PC-3 (cell line): ENCODE measurements at regions of chr7 and their contacts with region 1.

Region 1: GRCh38 chr7:154503962-154504550 is 451.9 kb downstream of the DPP6 start:
- DNase-seq: peak; percentile 53
- ATAC-seq: no peak
- H3K4me3 ChIP-seq: no peak overlapping the region
- H3K27ac ChIP-seq: no peak overlapping the region
- H3K4me1 ChIP-seq: no peaks in the 10 kb centered on the region
- H3K27me3 ChIP-seq: no peaks in the 10 kb centered on the region
- CTCF ChIP-seq: peak; percentile 61

Region 2: DNA sequence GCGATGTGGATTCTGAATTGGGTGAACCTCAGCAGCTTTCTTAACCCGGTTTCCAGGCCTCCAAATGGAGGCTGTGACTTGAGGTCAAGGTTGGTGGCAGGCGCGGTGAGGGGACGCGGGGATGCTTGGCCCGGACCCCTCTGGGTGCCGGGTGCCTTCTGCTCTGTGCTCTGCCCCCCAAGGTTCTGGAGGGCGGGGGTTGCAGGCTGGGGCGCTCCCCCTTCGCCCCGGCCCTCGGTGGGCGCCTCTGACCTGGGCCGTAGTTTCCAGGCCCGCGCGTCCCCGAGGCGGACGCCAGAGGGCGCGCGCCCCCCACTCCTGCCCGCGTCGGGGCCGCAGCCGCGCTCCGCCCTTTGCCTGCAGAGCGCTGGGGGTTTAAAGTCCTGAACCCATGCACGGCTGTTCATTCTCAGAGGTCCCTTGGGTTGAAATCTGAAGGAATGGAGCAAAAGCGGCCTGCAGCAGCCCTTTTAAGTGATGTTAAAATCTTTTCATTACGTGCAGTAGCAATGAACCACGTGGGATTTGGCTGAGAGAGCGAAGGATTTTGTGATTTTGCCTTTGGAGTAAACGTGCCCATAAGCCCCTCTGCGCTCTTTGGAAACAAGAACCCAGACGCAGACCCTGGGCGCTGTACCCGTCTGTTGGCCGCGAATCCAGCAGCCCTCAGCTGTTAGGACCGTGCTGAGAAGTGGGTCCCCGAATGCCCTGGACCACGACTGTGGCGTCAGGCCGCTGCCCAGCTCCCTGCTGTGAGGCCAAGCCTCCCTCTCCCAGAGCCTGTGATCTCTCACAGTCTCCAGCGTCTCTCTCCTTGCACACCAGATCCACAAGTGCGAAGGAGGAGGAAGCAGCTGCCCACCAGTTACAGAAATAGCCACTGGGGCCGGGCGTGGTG is 1609.5 kb before region 1 on chr7:
- CTCF ChIA-PET with region 1: no interaction called
- POLR2A ChIA-PET with region 1: no interaction called
- intact Hi-C with region 1: loop called (anchors 5 kb)
- DNase-seq: peak; percentile 29
- ATAC-seq: peak; percentile 81
- H3K4me3 ChIP-seq: no peak overlapping the region
- H3K27ac ChIP-seq: no peak overlapping the region
- H3K4me1 ChIP-seq: 0 out of 2 replicates have a peak, but pooled peaks cover 3% of the 10 kb centered on the region
- H3K27me3 ChIP-seq: peaks cover 10% of the 10 kb centered on the region; the same call in 1 of the 2 replicates
- CTCF ChIP-seq: peak; percentile 79

Region 3: GRCh38 chr7:154532771-154533170 is 28.7 kb after region 1 on chr7:
- CTCF ChIA-PET with region 1: no interaction called
- POLR2A ChIA-PET with region 1: no interaction called
- intact Hi-C with region 1: no loop called
- DNase-seq: no peak
- ATAC-seq: no peak
- H3K4me3 ChIP-seq: no peak overlapping the region
- H3K27ac ChIP-seq: no peak overlapping the region
- H3K4me1 ChIP-seq: no peaks in the 10 kb centered on the region
- H3K27me3 ChIP-seq: no peaks in the 10 kb centered on the region
- CTCF ChIP-seq: no peak

Region 4: DNA sequence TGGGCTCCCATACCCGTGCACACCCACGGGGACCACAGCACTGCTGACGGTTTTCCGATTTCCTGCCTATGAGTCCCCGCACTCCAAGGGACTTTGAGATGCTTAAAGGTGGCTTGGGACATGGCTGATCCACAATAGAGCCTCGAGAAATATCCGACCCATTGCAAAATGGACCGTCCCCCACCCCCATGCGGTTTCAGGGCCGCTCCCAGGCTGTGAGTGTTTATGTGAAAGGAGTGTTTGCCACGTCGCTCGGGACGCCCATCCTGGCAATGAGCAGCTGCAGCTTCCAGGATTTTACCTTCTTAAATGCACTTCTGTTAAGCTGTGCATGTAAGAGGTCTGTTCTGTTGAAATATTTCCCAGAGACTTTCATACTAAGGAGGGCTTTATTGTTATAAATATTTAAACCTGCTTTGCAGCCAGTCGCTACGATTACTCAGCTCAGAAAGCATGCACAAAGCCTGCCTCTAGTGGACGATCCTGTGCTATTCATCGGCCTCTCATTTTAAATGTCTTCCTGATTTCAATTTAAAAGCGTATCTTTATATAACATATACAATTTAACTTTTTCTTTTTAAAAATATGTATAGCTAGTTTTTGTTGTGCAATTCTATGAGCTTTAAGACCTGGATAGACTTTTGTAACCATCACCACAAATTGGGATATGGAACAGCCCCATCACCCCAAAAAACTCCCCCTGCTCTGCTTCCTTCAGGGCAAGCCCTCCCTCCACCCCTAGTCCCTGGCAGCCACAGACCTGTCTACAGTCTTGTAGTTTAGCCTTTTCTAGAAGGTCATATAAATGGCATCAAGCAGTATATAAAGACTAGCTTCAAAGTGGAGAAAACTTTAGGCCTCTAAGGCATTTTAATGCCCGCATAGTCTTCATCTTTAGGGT is 80.5 kb after region 1 on chr7:
- CTCF ChIA-PET with region 1: no interaction called
- POLR2A ChIA-PET with region 1: no interaction called
- intact Hi-C with region 1: no loop called
- DNase-seq: peak; percentile 13
- ATAC-seq: no peak
- H3K4me3 ChIP-seq: no peak overlapping the region
- H3K27ac ChIP-seq: no peak overlapping the region
- H3K4me1 ChIP-seq: no peaks in the 10 kb centered on the region
- H3K27me3 ChIP-seq: no peaks in the 10 kb centered on the region
- CTCF ChIP-seq: peak; percentile 41